GM18951 (cell line): ENCODE measurements at regions of chr16 and their contacts with region 1.

Region 1: DNA sequence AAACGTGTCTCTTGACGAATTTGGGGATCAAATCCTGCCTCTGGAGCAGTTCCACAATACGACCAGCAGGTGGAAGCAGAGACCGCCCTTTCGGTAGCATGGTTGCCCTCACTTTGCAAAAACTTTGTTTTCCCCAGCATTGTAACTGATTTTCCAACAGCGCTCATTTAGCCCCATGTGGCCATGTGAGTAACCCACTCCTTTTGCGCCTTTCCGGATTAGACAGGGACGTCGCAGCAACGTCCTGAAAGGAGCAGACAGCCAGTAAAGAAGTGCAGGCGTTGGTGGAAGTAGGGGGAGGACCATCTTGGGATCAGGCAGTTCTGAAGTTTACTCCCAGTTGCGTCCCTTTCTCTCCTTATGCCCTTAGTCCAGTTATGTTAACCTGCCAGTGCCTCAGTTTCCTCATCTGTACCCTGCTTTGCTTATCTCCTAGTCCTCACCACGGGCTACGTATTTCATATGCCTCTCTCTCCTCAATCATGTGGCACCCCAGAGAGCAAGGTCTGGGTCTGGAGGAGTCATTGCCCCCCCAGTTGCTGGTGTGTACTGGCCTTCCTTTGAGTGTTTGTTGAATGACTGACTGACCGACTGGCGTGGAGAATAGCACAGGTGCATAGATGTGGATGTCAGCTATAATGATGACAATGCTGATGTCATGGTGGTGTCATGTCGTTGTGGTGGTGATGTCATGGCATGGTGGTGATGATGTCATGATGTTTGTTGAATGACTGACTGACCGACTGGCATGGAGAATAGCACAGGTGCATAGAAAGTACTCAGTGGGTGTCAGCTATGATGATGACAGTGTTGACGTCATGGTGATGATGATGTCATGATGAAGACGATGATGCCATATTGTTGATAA is 22.3 kb downstream of the TMEM114 start:
- POLR2A ChIP-seq: no peak

Region 2: GRCh38 chr16:8310816-8311215 is 257.2 kb before region 1 on chr16:
- in situ Hi-C with region 1: no loop called
- POLR2A ChIP-seq: no peak

Region 3: GRCh38 chr16:8797364-8798173 is 229.6 kb after region 1 on chr16 and contains the starts of genes PMM2 and TMEM186:
- in situ Hi-C with region 1: loop called (anchors 25 kb)
- POLR2A ChIP-seq: peak; percentile 89

Region 4: DNA sequence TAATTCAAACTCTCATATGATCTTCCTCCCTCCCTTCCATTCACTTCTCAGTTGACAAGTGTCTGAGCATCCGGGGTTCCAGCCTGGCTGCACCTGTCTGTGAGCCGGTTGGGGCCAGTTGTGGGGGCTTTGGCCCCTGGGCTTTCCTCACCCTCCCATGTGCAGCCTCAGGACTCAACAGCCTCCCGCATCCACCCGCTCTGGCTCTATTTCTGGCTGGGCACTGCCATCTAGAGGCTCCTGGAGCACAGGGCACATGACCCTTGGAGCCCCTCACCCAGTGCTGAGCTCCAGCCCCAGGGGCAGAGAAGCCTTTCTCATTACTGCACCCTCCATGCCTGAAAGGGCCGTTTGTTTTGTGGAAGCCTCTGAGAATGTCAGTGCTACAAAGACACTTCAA is 566.8 kb after region 1 on chr16:
- in situ Hi-C with region 1: loop called (anchors 25 kb)
- POLR2A ChIP-seq: no peak